GM18951 (cell line): ENCODE measurements at regions of chr7 and their contacts with region 1.

Region 1: GRCh38 chr7:90244909-90245851 is at the start of gene CFAP69:
- POLR2A ChIP-seq: peak; percentile 69

Region 2: DNA sequence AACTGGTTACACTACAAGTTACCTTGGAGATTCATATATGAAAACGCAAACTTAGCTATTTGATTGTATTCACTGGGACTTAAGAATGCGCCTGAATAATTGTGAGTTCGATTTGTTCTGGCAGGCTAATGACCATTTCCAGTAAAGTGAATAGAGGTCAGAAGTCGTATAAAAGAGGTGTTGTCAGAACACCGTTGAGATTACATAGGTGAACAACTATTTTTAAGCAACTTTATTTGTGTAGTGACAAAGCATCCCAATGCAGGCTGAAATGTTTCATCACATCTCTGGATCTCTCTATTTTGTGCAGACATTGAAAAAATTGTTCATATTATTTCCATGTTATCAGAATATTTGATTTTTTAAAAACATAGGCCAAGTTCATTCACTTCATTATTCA is 81.6 kb before region 1 on chr7:
- in situ Hi-C with region 1: no loop called
- POLR2A ChIP-seq: no peak

Region 3: DNA sequence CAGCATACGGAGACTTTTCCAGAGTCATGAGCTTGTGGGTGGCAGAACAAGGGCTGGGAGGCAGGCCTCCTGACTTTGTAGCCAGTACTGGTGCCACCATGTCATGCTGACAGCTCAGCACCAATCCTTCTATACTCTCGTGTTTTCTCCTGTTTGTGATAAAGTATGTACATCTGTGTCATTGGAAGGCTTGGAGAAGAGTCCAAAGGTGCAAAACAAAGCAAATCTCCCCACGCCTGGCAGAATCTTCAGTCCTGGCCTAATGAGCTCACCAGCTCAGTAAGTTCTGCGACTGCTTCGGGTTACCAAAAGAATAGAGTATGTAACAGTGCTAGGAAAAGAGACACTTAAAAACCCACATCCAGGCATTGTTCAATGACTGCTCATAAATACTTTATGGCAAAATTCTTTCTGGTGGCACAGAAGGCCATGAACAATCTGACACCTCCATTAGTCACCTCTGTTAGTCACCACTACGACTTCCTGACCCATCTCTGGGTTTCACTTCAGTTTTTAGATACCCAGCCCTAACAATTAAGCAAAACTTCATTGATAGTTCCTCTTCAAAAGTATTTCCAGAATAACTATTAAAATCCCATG is 66.4 kb before region 1 on chr7:
- in situ Hi-C with region 1: loop called (anchors 10 kb)
- POLR2A ChIP-seq: no peak

Region 4: DNA sequence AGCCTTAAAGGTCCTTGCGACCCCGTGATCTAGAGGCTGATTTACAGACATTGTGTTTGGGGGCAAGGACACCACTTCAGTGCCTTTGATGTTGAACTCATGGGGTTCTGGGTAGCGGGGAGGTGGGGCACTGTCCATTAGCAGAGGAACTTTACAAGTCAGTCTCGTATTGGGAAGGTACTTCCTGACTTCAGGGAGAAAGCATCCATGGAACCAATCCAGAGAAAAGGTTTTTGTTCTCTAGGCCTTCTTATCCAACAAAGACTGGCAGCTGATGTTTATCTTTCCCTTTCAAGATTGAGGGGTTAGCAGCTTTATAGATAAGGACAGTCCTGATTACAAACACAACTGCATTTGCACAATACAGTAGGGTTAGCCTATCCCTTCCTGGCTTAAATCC is 104.1 kb after region 1 on chr7:
- in situ Hi-C with region 1: no loop called
- POLR2A ChIP-seq: no peak